ENCODE measurements at regions of chr1 and their contacts with region 1.

Region 1: GRCh38 chr1:108512239-108512981 is 47.5 kb upstream of the EEIG2 start:
- DNase-seq: no peak
- ATAC-seq: peak; percentile 66
- H3K4me3 ChIP-seq: no peak overlapping the region
- H3K27ac ChIP-seq: no peak overlapping the region
- H3K4me1 ChIP-seq: no peaks in the 10 kb centered on the region
- H3K27me3 ChIP-seq: no peaks in the 10 kb centered on the region
- CTCF ChIP-seq: peak; percentile 70 to 93 (median 88)
- POLR2A ChIP-seq: no peak

Region 2: GRCh38 chr1:108559215-108560186 is 47.1 kb after region 1 on chr1 and contains the start of gene EEIG2:
- intact Hi-C with region 1: loop called (anchors 10 kb)
- DNase-seq: peak; percentile 75 to 84 (median 82)
- ATAC-seq: peak; percentile 92
- H3K4me3 ChIP-seq: peak within 1 kb of the TSS; percentile 31 to 32
- H3K27ac ChIP-seq: peak within 1 kb of the TSS in 3 of 4 donors; percentile 50 to 61 (median 54)
- H3K4me1 ChIP-seq: peaks cover 21% of the 10 kb centered on the region
- H3K27me3 ChIP-seq: no peaks in the 10 kb centered on the region
- CTCF ChIP-seq: peak; percentile 36 to 93 (median 83)
- POLR2A ChIP-seq: no peak
- total RNA-seq, gene EEIG2: 7.0 to 9.2 TPM

Region 3: GRCh38 chr1:108643492-108644335 is 131.3 kb after region 1 on chr1:
- intact Hi-C with region 1: loop called (anchors 5 kb)
- DNase-seq: peak; percentile 45 to 77 (median 64)
- ATAC-seq: peak; percentile 63
- H3K4me3 ChIP-seq: no peak overlapping the region
- H3K27ac ChIP-seq: no peak overlapping the region
- H3K4me1 ChIP-seq: peaks cover 7% of the 10 kb centered on the region
- H3K27me3 ChIP-seq: no peaks in the 10 kb centered on the region
- CTCF ChIP-seq: peak in 6 of 7 experiments; percentile 46 to 77 (median 70)
- POLR2A ChIP-seq: no peak

Region 4: GRCh38 chr1:108897865-108898720 is 385.7 kb after region 1 on chr1:
- intact Hi-C with region 1: loop called (anchors 10 kb)
- DNase-seq: peak in 3 of 4 donors; percentile 32 to 59 (median 39)
- ATAC-seq: peak; percentile 65
- H3K4me3 ChIP-seq: no peak overlapping the region
- H3K27ac ChIP-seq: no peak overlapping the region
- H3K4me1 ChIP-seq: no peaks in the 10 kb centered on the region
- H3K27me3 ChIP-seq: no peaks in the 10 kb centered on the region
- CTCF ChIP-seq: peak; percentile 45 to 84 (median 67)
- POLR2A ChIP-seq: no peak

Region 5: GRCh38 chr1:109331113-109331512 is 818.7 kb after region 1 on chr1:
- intact Hi-C with region 1: no loop called
- DNase-seq: no peak
- ATAC-seq: no peak
- H3K4me3 ChIP-seq: no peak overlapping the region
- H3K27ac ChIP-seq: no peak overlapping the region
- H3K4me1 ChIP-seq: no peaks in the 10 kb centered on the region
- H3K27me3 ChIP-seq: no peaks in the 10 kb centered on the region
- CTCF ChIP-seq: no peak
- POLR2A ChIP-seq: no peak